ENCODE measurements at regions of chr2 and their contacts with region 1.

Region 1: GRCh38 chr2:55050133-55050994 is at the start of gene RTN4:
- DNase-seq: peak; percentile 99
- H3K4me3 Mint-ChIP-seq: peak within 1 kb of the TSS; percentile 97
- H3K27ac Mint-ChIP-seq: peak within 1 kb of the TSS; percentile 97
- H3K4me1 Mint-ChIP-seq: peaks cover 48% of the 10 kb centered on the region
- H3K27me3 Mint-ChIP-seq: no peaks in the 10 kb centered on the region
- total RNA-seq, gene RTN4: 86.9 and 90.1 TPM in 2 replicates

Region 2: DNA sequence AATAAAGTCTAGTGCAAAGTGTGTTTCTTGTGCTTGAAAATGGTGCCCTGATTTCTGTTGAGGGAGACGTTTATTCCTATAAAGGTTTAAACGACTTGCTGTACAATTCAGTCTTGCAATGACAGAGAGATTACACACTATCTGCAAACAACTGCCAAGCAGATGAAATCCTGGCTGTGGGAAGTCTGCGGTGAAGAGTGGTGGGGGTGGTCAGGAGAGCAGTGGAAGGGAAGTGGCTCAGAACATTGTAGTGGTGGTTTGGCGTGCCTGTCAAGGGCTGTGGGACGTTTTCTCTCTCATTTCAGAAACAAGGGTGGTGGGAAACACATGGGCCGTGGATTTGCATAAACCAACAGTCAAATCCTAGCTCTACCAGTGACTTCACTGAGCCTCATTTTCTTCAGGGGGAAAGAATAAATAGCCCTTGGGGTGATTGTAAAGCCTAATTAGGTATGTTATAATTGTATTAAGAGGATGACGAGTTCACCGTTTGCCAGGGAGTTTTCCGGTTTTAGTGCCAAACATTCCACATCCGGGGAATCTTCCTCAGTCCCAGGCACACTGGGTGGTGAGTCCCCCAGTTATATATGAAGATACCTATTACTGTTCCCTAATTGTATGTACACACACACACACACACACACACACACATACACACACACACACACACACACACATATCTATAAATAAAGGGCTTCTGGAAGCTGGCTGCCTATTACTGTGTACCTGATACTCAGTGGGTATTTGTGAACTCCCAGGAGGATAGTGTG is 479.3 kb before region 1 on chr2:
- intact Hi-C with region 1: loop called (anchors 5 kb)
- DNase-seq: peak; percentile 95
- H3K4me3 Mint-ChIP-seq: peak overlapping the region; percentile 79
- H3K27ac Mint-ChIP-seq: peak overlapping the region; percentile 96
- H3K4me1 Mint-ChIP-seq: peaks cover 78% of the 10 kb centered on the region
- H3K27me3 Mint-ChIP-seq: no peaks in the 10 kb centered on the region

Region 3: DNA sequence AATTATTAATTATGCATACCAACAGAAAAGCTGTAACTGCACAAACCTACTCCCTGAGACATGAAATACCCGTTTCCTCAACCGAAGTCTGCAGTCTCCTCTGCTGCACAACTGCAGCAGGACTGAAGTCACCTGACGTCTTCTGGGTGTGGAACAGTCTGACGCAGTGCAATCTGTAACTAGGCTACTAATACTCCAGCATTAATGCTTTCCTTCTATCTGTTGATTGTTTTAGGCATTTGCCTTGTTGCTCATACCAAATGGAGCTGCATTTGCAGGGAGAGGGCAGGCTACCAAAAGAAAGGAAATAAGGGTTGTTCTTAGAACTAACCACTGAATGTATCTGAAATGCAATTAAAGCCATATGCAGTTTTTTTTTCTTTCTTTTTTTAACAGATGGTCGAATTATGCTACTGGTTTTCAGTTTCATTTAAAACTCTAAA is 40.2 kb before region 1 on chr2:
- intact Hi-C with region 1: loop called (anchors 2 kb)
- DNase-seq: peak; percentile 82
- H3K4me3 Mint-ChIP-seq: peak overlapping the region; percentile 88
- H3K27ac Mint-ChIP-seq: peak overlapping the region; percentile 82
- H3K4me1 Mint-ChIP-seq: peaks cover 37% of the 10 kb centered on the region
- H3K27me3 Mint-ChIP-seq: no peaks in the 10 kb centered on the region

Region 4: GRCh38 chr2:55133467-55134315 is 83.3 kb after region 1 on chr2:
- intact Hi-C with region 1: loop called (anchors 2 kb)
- DNase-seq: peak; percentile 90
- H3K4me3 Mint-ChIP-seq: peak overlapping the region; percentile 79
- H3K27ac Mint-ChIP-seq: peak overlapping the region; percentile 91
- H3K4me1 Mint-ChIP-seq: peaks cover 21% of the 10 kb centered on the region
- H3K27me3 Mint-ChIP-seq: no peaks in the 10 kb centered on the region

Region 5: GRCh38 chr2:55268907-55269644 is 218.7 kb after region 1 on chr2 and contains the start of gene MTIF2:
- intact Hi-C with region 1: loop called (anchors 1 kb)
- DNase-seq: peak; percentile 97
- H3K4me3 Mint-ChIP-seq: peak within 1 kb of the TSS; percentile 96
- H3K27ac Mint-ChIP-seq: peak within 1 kb of the TSS; percentile 95
- H3K4me1 Mint-ChIP-seq: peaks cover 7% of the 10 kb centered on the region
- H3K27me3 Mint-ChIP-seq: peaks cover 4% of the 10 kb centered on the region
- total RNA-seq, gene MTIF2: 45.7 and 47.1 TPM in 2 replicates

Region 6: GRCh38 chr2:55519938-55520885 is 469.8 kb after region 1 on chr2:
- intact Hi-C with region 1: loop called (anchors 2 kb)
- DNase-seq: no peak
- H3K4me3 Mint-ChIP-seq: peak overlapping the region; percentile 98
- H3K27ac Mint-ChIP-seq: peak overlapping the region; percentile 95
- H3K4me1 Mint-ChIP-seq: peaks cover 12% of the 10 kb centered on the region
- H3K27me3 Mint-ChIP-seq: no peaks in the 10 kb centered on the region

Measured in activated CD4-positive, alpha-beta T cell treated with anti-CD3 and anti-CD28 coated beads, Interleukin-2, amount 10 ng/mL, durations not matched to agents 24 days and 14 days (primary cell).